ENCODE measurements at regions of chr1 and their contacts with region 1.

Region 1: GRCh38 chr1:168145184-168146159 is 8.7 kb upstream of the GPR161 start:
- DNase-seq: peak; percentile 93 to 95
- H3K4me3 ChIP-seq: no peak overlapping the region
- H3K4me3 Mint-ChIP-seq: peak overlapping the region; percentile 68
- H3K27ac Mint-ChIP-seq: peak overlapping the region; percentile 53
- H3K4me1 ChIP-seq: peaks cover 36% of the 10 kb centered on the region
- H3K4me1 Mint-ChIP-seq: peaks cover 32% of the 10 kb centered on the region
- H3K27me3 ChIP-seq: no peaks in the 10 kb centered on the region
- H3K27me3 Mint-ChIP-seq: no peaks in the 10 kb centered on the region
- CTCF ChIP-seq: peak; percentile 96 to 98

Region 2: DNA sequence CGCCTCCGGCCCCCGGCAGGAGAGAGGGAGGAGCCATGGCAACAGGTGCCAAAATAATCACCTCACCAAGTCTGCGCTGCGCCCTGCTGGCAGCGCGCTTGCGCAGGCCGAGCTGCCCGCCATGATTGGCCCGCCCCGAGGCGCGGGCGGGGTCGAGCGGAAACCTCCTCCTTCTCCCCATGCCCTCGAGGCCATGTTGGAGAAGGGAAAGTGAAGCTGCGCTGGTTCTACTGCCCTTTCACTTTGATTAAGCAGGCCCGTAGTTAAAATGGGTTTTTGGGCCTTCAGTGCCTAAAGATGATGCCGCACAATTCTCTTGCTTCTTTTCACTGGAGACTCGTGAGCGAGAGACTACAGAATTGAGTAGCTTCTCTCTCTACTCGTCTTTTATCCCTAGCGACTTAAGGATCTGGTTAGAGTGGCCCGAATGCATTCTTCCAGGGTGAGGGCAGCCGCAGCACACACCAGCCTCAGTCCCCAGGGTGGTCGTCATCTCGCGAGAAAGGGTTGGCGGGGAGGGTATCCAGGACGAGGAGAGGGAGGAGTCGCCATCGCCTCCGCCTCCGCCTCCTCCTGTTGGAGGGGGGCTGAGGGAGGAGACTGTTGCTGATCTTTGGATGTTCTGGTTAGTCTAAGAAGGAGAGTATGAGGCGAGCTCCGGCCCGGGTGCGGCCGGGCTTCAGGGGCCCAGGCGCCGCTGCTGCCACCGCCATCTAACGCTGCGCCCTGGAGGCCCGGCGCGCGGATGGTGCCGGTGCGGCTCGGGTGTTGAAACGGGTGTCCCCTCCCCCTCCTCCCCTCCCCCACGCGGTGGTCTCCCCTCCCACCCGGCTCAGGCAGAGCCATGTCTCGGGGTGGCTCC is 209.2 kb before region 1 on chr1 and contains the start of gene DCAF6:
- CTCF ChIA-PET with region 1: no interaction called
- POLR2A ChIA-PET with region 1: no interaction called
- intact Hi-C with region 1: loop called (anchors 10 kb)
- DNase-seq: peak; percentile 98
- H3K4me3 ChIP-seq: peak within 1 kb of the TSS; percentile 66
- H3K4me3 Mint-ChIP-seq: peak within 1 kb of the TSS; percentile 82
- H3K27ac Mint-ChIP-seq: peak within 1 kb of the TSS; percentile 86
- H3K4me1 ChIP-seq: peaks cover 15% of the 10 kb centered on the region; the same call in 1 of the 2 replicates
- H3K4me1 Mint-ChIP-seq: peaks cover 6% of the 10 kb centered on the region
- H3K27me3 ChIP-seq: no peaks in the 10 kb centered on the region
- H3K27me3 Mint-ChIP-seq: no peaks in the 10 kb centered on the region
- CTCF ChIP-seq: no peak
- total RNA-seq, gene DCAF6: 41.9 and 53.0 TPM in 2 replicates

Region 3: GRCh38 chr1:168092566-168093355 is 52.7 kb before region 1 on chr1:
- CTCF ChIA-PET with region 1: no interaction called
- POLR2A ChIA-PET with region 1: no interaction called
- intact Hi-C with region 1: loop called (anchors 1 kb)
- DNase-seq: peak in 1 of 2 experiments; percentile 50
- H3K4me3 ChIP-seq: no peak overlapping the region
- H3K4me3 Mint-ChIP-seq: no peak overlapping the region
- H3K27ac Mint-ChIP-seq: no peak overlapping the region
- H3K4me1 ChIP-seq: no peaks in the 10 kb centered on the region
- H3K4me1 Mint-ChIP-seq: peaks cover 9% of the 10 kb centered on the region
- H3K27me3 ChIP-seq: no peaks in the 10 kb centered on the region
- H3K27me3 Mint-ChIP-seq: no peaks in the 10 kb centered on the region
- CTCF ChIP-seq: peak; percentile 14 to 63

Region 4: DNA sequence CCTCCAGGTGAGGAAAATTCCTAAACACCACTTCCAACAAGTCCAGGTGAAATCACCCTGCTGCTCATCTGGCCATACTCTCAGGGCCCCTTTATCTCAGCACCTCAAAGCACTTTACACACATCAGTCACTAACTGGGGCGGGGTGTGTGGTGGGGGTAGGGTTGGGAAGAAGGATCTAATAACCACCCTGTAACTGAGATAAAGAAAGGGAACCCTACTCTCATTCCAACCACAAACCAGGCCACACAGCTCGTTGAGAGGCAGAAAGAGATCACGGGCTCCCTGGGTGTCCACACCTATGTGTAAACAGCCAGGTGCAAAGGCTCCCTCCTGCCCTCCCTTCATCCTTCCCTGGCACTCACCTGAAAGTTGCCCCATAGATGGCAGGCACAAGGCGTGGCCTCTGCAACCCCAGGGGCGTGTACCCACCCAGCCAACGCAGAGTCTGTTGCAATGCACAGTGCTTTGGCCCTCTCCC is 29.1 kb before region 1 on chr1:
- CTCF ChIA-PET with region 1: interaction called, 8 read pairs
- POLR2A ChIA-PET with region 1: no interaction called
- intact Hi-C with region 1: loop called (anchors 1 kb)
- DNase-seq: peak; percentile 50 to 70
- H3K4me3 ChIP-seq: no peak overlapping the region
- H3K4me3 Mint-ChIP-seq: peak overlapping the region; percentile 9
- H3K27ac Mint-ChIP-seq: peak overlapping the region; percentile 32
- H3K4me1 ChIP-seq: peaks cover 14% of the 10 kb centered on the region
- H3K4me1 Mint-ChIP-seq: peaks cover 23% of the 10 kb centered on the region
- H3K27me3 ChIP-seq: no peaks in the 10 kb centered on the region
- H3K27me3 Mint-ChIP-seq: no peaks in the 10 kb centered on the region
- CTCF ChIP-seq: no peak

Measured in Caco-2 (cell line).